WTC11 (cell line): ENCODE measurements at regions of chr1 and their contacts with region 1.

Region 1: GRCh38 chr1:40438391-40439015 is 11.8 kb upstream of the ZFP69B start:
- DNase-seq: no peak
- ATAC-seq: peak; percentile 77
- H3K4me3 Mint-ChIP-seq: no peak overlapping the region
- H3K27ac Mint-ChIP-seq: no peak overlapping the region
- H3K4me1 Mint-ChIP-seq: no peaks in the 10 kb centered on the region
- H3K27me3 Mint-ChIP-seq: no peaks in the 10 kb centered on the region
- CTCF ChIP-seq: peak; percentile 41

Region 2: DNA sequence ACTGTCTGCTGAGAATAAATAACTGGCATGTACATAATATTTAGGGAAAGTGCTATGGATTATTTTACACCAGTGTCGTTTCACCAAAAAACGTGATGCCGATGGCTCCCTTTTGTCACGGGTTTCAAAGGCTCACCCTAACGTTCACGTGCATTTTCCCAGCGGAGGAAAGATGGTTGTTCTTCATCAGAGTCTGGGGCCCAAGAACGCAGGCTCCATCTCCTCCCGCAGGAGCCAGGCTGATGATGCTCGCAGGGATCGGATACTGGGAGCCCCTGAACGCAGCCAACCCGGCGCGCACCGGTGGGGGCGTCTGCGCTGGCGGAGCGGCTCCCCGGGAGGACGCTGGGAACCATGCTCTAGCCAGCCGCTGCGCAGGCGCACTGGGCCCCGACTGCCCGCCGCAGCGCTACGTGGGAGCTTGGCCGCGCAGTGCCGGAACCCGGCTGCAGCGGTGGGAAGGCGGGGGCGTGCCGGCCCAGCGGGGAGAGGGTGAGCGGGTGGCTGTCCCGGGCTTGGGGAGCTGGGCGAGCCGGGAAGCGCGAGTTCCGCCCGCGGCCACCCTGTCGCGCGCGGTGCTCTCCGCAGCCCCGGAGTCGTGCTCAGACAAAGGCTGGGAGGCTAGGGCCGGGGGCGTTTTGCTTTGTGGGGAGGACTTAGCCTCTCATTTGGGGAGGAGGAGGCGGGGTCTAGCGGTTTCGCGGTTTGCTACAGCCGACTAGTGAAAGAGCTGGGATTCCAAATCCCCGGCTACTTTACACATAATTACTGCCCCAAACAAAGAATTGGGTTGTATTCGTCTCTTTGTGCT is 11.4 kb after region 1 on chr1 and contains the start of gene ZFP69B:
- CTCF ChIA-PET with region 1: interaction called, 28 read pairs
- POLR2A ChIA-PET with region 1: interaction called, 3 read pairs
- DNase-seq: peak; percentile 94
- ATAC-seq: peak; percentile 93
- H3K4me3 Mint-ChIP-seq: peak within 1 kb of the TSS; percentile 81
- H3K27ac Mint-ChIP-seq: peak within 1 kb of the TSS; percentile 80
- H3K4me1 Mint-ChIP-seq: peaks cover 22% of the 10 kb centered on the region
- H3K27me3 Mint-ChIP-seq: peaks cover 4% of the 10 kb centered on the region
- CTCF ChIP-seq: no peak
- total RNA-seq, gene ZFP69B: 6.8 to 8.2 TPM (median 7.1 TPM) in 3 replicates